ENCODE measurements at regions of chr9 and their contacts with region 1.

Region 1: DNA sequence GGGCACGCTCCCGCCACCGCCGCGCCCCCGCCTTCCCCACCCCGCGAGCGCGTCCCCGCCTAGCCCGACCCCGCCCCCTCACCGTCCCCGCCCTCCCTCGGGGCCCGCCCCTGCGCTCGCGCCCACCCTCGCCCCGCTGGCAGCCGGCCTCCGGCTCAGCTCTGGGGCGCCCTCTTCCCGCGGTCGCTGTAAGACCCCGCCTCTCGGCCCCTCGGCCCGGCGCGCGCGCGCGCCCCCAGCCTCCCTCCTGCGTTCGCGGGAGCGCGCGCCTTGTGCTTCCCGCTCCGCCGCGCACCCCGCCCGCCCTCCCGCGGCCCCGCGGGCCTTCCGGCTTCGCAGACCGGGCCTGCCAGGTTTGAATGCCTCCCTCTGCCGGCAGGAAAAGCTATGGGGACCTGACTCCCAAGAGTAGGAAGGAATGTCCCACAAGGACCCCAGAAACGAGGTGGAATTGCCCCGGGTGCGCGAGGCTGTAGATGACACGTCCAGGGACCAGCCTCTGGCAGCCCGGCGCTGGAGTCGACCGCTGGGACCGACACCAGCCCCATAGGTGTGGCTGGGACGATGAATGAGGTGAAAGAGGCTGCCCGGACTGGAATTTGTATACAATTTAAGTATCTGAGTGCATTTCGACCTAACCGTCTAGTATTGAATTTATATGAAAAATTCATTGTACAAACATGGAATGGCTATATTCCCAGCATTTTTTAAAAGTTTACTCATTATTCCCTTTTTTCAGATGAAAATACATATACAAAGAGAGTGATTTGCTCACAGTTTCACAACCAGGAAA is 416 bp upstream of the PTBP3 start:
- DNase-seq: peak; percentile 73 to 96
- H3K4me3 ChIP-seq: peak overlapping the region; percentile 89
- H3K27ac ChIP-seq: peak overlapping the region; percentile 90
- H3K4me1 ChIP-seq: peaks cover 49% of the 10 kb centered on the region
- H3K27me3 ChIP-seq: no peaks in the 10 kb centered on the region
- CTCF ChIP-seq: peak; percentile 57

Region 2: DNA sequence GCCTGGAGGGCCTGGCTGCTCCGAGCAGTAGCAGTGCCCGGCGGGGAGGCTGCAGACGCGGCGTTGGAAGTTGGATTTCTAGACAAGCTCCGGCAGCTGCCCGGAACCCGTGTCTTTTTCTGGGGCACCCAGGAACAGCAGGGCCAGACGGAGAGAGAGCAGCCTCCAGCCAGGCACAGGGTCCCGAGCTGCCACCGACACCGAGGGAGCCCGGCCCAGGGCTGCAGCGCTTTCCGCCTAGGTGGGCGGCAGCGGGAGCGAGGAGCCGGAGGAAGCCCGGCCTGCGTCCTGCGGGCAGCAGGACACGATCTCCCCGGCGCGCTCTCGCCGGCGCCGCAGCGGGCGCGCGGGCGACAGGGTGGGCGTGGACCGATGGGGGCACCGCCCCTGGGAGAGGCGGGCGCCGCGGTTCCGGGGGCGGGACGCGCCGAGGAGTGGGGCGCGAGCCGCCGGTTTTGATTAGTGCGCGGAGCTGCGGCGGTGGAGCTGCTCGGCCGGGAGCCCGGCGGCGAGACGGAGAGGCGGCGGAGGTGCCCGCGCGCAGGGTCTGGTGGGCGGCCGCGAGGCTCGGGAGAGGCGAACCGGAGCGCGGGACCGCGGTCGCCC is 437.4 kb before region 1 on chr9 and contains the start of gene UGCG:
- CTCF ChIA-PET with region 1: interaction called, 12 read pairs
- POLR2A ChIA-PET with region 1: no interaction called
- intact Hi-C with region 1: no loop called
- DNase-seq: peak; percentile 68 to 96
- H3K4me3 ChIP-seq: peak within 1 kb of the TSS; percentile 76
- H3K27ac ChIP-seq: peak within 1 kb of the TSS; percentile 83
- H3K4me1 ChIP-seq: peaks cover 59% of the 10 kb centered on the region
- H3K27me3 ChIP-seq: no peaks in the 10 kb centered on the region
- CTCF ChIP-seq: no peak
- total RNA-seq, gene UGCG: 79.8 and 88.7 TPM in 2 replicates

Region 3: GRCh38 chr9:112158656-112159367 is 175.0 kb before region 1 on chr9:
- CTCF ChIA-PET with region 1: no interaction called
- POLR2A ChIA-PET with region 1: interaction called, 16 read pairs
- intact Hi-C with region 1: no loop called
- DNase-seq: no peak
- H3K4me3 ChIP-seq: no peak overlapping the region
- H3K27ac ChIP-seq: no peak overlapping the region
- H3K4me1 ChIP-seq: no peaks in the 10 kb centered on the region; the same call in 1 of the 2 replicates
- H3K27me3 ChIP-seq: no peaks in the 10 kb centered on the region
- CTCF ChIP-seq: no peak

Region 4: GRCh38 chr9:112233768-112234167 is 100.1 kb before region 1 on chr9:
- CTCF ChIA-PET with region 1: interaction called, 3 read pairs
- POLR2A ChIA-PET with region 1: no interaction called
- intact Hi-C with region 1: loop called (anchors 5 kb)
- DNase-seq: peak in 1 of 2 experiments; percentile 51
- H3K4me3 ChIP-seq: no peak overlapping the region
- H3K27ac ChIP-seq: peak overlapping the region; percentile 22
- H3K4me1 ChIP-seq: peaks cover 6% of the 10 kb centered on the region
- H3K27me3 ChIP-seq: no peaks in the 10 kb centered on the region
- CTCF ChIP-seq: no peak

Region 5: GRCh38 chr9:112361601-112362000 is 27.8 kb after region 1 on chr9:
- CTCF ChIA-PET with region 1: no interaction called
- POLR2A ChIA-PET with region 1: no interaction called
- intact Hi-C with region 1: loop called (anchors 2 kb)
- DNase-seq: peak in 1 of 2 experiments; percentile 53
- H3K4me3 ChIP-seq: no peak overlapping the region
- H3K27ac ChIP-seq: no peak overlapping the region
- H3K4me1 ChIP-seq: peaks cover 11% of the 10 kb centered on the region; the same call in 1 of the 2 replicates
- H3K27me3 ChIP-seq: no peaks in the 10 kb centered on the region
- CTCF ChIP-seq: peak; percentile 78

Region 6: DNA sequence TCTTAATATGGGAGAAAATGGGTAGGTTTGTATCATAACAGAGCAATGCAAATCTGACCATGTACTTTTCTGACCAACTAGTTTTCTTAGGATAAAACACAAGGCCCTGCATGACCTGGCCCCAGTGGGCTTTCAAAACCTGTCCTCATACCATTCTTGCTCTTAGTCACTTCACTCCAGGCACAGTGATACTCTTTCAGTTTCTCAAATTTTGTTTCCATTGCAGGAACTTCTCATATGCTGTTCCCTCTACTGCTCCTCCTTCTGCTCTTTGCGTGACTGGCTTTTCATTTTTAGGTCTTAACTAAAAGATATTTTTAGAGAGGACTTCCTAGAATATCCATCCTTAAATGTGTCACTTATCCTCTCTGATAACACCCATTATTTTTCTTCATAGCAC is 271.7 kb after region 1 on chr9:
- CTCF ChIA-PET with region 1: interaction called, 11 read pairs
- POLR2A ChIA-PET with region 1: no interaction called
- intact Hi-C with region 1: no loop called
- DNase-seq: no peak
- H3K4me3 ChIP-seq: no peak overlapping the region
- H3K27ac ChIP-seq: no peak overlapping the region
- H3K4me1 ChIP-seq: 0 out of 2 replicates have a peak, but pooled peaks cover 5% of the 10 kb centered on the region
- H3K27me3 ChIP-seq: no peaks in the 10 kb centered on the region
- CTCF ChIP-seq: no peak

Region 7: GRCh38 chr9:112725961-112726360 is 392.1 kb after region 1 on chr9:
- CTCF ChIA-PET with region 1: no interaction called
- POLR2A ChIA-PET with region 1: no interaction called
- intact Hi-C with region 1: no loop called
- DNase-seq: no peak
- H3K4me3 ChIP-seq: no peak overlapping the region
- H3K27ac ChIP-seq: no peak overlapping the region
- H3K4me1 ChIP-seq: no peaks in the 10 kb centered on the region
- H3K27me3 ChIP-seq: no peaks in the 10 kb centered on the region
- CTCF ChIP-seq: no peak

Region 8: DNA sequence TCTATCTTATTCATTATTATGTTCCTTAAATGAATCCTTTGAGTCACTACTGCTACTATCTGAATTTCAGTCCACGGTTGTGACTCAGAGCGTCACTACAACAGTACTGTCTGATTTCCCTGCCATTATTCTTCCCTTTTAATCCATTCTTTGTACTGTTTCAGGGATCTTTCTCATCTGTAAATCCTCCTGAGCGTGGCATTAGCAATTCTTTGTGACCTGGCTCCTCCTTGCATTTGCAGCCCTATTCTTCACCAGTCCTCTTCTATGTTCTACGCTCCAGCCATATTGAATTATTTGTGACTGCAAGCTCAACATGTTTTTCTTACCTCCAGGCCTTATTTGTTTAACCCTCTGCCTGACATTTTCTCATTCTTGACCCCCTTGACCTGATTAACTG is 947.5 kb after region 1 on chr9:
- CTCF ChIA-PET with region 1: interaction called, 12 read pairs
- POLR2A ChIA-PET with region 1: no interaction called
- intact Hi-C with region 1: no loop called
- DNase-seq: no peak
- H3K4me3 ChIP-seq: no peak overlapping the region
- H3K27ac ChIP-seq: no peak overlapping the region
- H3K4me1 ChIP-seq: 0 out of 2 replicates have a peak, but pooled peaks cover 3% of the 10 kb centered on the region
- H3K27me3 ChIP-seq: no peaks in the 10 kb centered on the region
- CTCF ChIP-seq: no peak